B cell (primary cell): ENCODE measurements at regions of chr1 and their contacts with region 1.

Region 1: DNA sequence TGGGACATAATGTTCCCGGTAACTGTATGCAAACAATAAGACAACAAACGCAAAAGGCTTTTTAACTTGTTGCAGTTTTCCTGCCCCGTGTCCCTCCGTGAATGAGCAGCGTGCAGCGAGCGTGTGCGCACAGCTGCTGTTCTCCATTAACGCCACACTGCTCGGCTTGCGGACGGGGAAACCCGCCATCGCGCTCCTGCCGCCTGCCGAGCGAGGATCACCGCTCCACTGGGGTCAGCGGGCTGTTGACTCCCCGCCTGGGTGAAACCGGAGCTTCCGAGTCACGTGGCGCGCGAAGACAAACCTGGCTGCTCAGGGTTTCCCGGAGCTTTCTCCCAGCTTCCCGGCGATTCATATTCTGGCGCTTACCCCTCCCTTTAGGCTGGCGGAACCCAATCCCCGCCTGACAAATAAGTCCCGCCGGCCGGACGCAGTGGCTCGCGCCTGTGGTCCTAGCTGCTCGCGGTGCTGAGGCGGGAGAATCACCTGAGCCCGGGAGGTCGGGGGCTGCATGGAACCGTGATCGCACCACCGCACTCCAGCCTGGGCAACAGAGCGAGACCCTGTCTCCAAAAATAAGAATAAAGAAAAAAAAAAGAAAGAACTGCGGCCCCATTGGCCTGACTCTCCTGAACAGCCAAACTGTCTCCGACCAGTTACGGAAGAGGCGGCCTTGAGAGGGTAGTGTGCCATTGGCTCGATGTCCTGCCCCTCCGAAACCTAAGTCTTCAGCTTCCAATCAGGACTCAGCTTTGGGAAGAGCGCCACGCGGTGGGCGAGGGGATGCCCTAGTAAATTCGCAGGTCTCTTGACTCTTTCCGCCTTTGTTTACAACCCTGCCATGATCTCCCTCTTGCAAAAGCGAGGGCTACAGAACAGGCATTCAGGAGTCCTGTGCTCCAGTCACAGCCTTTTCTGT is at the start of gene CREB3L4:
- DNase-seq: peak; percentile 94
- ATAC-seq: peak; percentile 82
- H3K4me3 ChIP-seq: peak within 1 kb of the TSS; percentile 73 to 95 (median 90)
- H3K4me3 Mint-ChIP-seq: peak within 1 kb of the TSS; percentile 98
- H3K27ac ChIP-seq: peak within 1 kb of the TSS; percentile 91 to 94
- H3K27ac Mint-ChIP-seq: peak within 1 kb of the TSS; percentile 99
- H3K4me1 ChIP-seq: peaks cover 43 to 51% of the 10 kb centered on the region in 2 donors
- H3K4me1 Mint-ChIP-seq: peaks cover 49% of the 10 kb centered on the region
- H3K27me3 ChIP-seq: no peaks in the 10 kb centered on the region
- H3K27me3 Mint-ChIP-seq: no peaks in the 10 kb centered on the region
- CTCF ChIP-seq: peak; percentile 39
- total RNA-seq, gene CREB3L4: 19.9 and 21.8 TPM in 2 replicates

Region 2: DNA sequence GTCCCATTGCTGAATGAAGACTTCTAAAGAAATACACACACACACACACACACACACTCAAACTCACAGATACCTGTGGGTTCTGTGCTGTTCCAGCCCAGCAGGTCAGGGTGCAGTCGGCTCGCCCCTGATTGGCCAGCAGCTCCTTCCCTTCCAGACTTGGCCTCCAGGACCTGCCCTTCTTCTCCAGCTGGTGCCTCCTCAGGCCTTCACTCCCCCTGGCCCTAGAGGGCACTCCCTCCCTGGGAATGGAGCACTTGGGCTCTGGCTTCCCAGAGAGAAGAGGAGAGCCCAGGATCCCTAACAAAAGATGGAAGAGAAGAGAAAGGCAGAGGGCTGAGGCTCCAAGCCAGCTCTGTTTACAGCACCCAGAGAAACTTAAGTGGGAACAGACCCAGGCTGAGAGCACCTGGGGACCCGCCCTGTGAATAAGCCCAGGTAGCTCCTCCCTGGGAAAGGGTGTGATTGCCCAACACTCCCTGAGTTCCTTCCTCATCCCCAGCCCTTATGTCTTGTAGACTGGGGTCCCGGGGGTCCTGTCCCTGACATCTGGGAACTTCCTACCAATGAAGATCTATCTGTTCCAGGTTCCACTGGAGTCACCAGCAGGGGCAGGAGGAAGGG is 654.7 kb before region 1 on chr1 and contains the start of gene PGLYRP3:
- CTCF ChIA-PET with region 1: no interaction called
- POLR2A ChIA-PET with region 1: no interaction called
- intact Hi-C with region 1: no loop called
- DNase-seq: no peak
- ATAC-seq: no peak
- H3K4me3 ChIP-seq: no peak within 1 kb of the TSS
- H3K4me3 Mint-ChIP-seq: no peak within 1 kb of the TSS
- H3K27ac ChIP-seq: no peak within 1 kb of the TSS
- H3K27ac Mint-ChIP-seq: no peak within 1 kb of the TSS
- H3K4me1 ChIP-seq: no peaks in the 10 kb centered on the region
- H3K4me1 Mint-ChIP-seq: no peaks in the 10 kb centered on the region
- H3K27me3 ChIP-seq: peaks cover 0 to 3% (median 0%) of the 10 kb centered on the region in 4 experiments
- H3K27me3 Mint-ChIP-seq: peaks cover 30% of the 10 kb centered on the region
- CTCF ChIP-seq: no peak
- total RNA-seq, gene PGLYRP3: not detected in 2 replicates

Region 3: GRCh38 chr1:153977250-153978240 is 10.2 kb after region 1 on chr1 and contains the start of gene JTB:
- CTCF ChIA-PET with region 1: interaction called, 31 read pairs
- POLR2A ChIA-PET with region 1: interaction called, 34 read pairs
- intact Hi-C with region 1: loop called (anchors 1 kb)
- DNase-seq: peak; percentile 87
- ATAC-seq: peak; percentile 96
- H3K4me3 ChIP-seq: peak within 1 kb of the TSS; percentile 59 to 96 (median 90)
- H3K4me3 Mint-ChIP-seq: peak within 1 kb of the TSS; percentile 98
- H3K27ac ChIP-seq: peak within 1 kb of the TSS; percentile 55 to 87
- H3K27ac Mint-ChIP-seq: peak within 1 kb of the TSS; percentile 96
- H3K4me1 ChIP-seq: peaks cover 16 to 22% of the 10 kb centered on the region in 2 donors
- H3K4me1 Mint-ChIP-seq: peaks cover 34% of the 10 kb centered on the region
- H3K27me3 ChIP-seq: no peaks in the 10 kb centered on the region
- H3K27me3 Mint-ChIP-seq: no peaks in the 10 kb centered on the region
- CTCF ChIP-seq: no peak
- total RNA-seq, gene JTB: 99.1 and 106 TPM in 2 replicates